ENCODE measurements at regions of chr12 and their contacts with region 1.

Region 1: GRCh38 chr12:91109148-91109564 is 2.1 kb downstream of the LUM start:
- DNase-seq: peak; percentile 67
- ATAC-seq: peak; percentile 70
- H3K4me3 Mint-ChIP-seq: no peak overlapping the region
- H3K27ac Mint-ChIP-seq: no peak overlapping the region
- H3K4me1 Mint-ChIP-seq: no peaks in the 10 kb centered on the region
- H3K27me3 Mint-ChIP-seq: peaks cover 3% of the 10 kb centered on the region

Region 2: GRCh38 chr12:90945070-90945649 is 164.0 kb before region 1 on chr12:
- CTCF ChIA-PET with region 1: interaction called, 14 read pairs
- POLR2A ChIA-PET with region 1: no interaction called
- DNase-seq: no peak
- ATAC-seq: peak; percentile 64
- H3K4me3 Mint-ChIP-seq: no peak overlapping the region
- H3K27ac Mint-ChIP-seq: no peak overlapping the region
- H3K4me1 Mint-ChIP-seq: no peaks in the 10 kb centered on the region
- H3K27me3 Mint-ChIP-seq: peaks cover 6% of the 10 kb centered on the region

Region 3: DNA sequence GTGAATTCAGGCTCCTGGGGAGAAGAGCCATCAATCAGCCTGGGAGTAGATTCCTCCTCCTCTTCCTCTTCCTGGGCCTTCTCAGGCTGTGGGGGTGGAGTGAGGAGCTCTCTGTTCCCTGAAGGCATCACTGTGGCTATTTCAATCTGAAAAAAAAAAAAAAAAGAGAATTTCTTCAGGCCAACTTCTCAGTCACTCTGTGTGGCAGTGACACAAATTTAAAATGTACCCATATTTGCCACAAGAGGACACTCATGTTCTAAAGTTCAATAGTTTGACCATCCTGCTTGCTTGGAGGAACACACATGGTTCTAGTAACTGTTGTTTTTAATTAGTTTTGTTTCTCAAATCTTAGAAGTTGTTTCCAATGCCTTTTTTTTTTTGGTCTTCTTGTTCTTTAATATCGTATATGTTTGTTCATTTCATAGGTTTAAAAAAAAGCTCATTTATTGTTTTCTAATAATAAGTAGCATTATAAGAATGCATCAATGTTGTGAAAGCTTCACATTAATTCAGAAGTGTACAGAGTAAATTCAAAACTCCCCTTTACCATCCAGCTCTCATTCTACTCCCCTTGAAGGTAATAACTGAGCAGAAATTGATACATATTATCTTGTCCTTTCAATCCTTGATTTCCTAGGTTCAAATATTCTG is 130.9 kb before region 1 on chr12:
- CTCF ChIA-PET with region 1: interaction called, 31 read pairs
- POLR2A ChIA-PET with region 1: no interaction called
- DNase-seq: no peak
- ATAC-seq: peak; percentile 65
- H3K4me3 Mint-ChIP-seq: no peak overlapping the region
- H3K27ac Mint-ChIP-seq: no peak overlapping the region
- H3K4me1 Mint-ChIP-seq: no peaks in the 10 kb centered on the region
- H3K27me3 Mint-ChIP-seq: peaks cover 10% of the 10 kb centered on the region

Region 4: GRCh38 chr12:91129662-91130362 is 20.7 kb after region 1 on chr12:
- CTCF ChIA-PET with region 1: no interaction called
- POLR2A ChIA-PET with region 1: no interaction called
- DNase-seq: no peak
- ATAC-seq: no peak
- H3K4me3 Mint-ChIP-seq: no peak overlapping the region
- H3K27ac Mint-ChIP-seq: no peak overlapping the region
- H3K4me1 Mint-ChIP-seq: no peaks in the 10 kb centered on the region
- H3K27me3 Mint-ChIP-seq: no peaks in the 10 kb centered on the region

Measured in activated CD8-positive, alpha-beta T cell treated with anti-CD3 and anti-CD28 coated beads, Interleukin-2, amount 10 ng/mL, durations not matched to agents 7 days and 5 days (primary cell).